ENCODE measurements at regions of chr15 and their contacts with region 1.

Region 1: DNA sequence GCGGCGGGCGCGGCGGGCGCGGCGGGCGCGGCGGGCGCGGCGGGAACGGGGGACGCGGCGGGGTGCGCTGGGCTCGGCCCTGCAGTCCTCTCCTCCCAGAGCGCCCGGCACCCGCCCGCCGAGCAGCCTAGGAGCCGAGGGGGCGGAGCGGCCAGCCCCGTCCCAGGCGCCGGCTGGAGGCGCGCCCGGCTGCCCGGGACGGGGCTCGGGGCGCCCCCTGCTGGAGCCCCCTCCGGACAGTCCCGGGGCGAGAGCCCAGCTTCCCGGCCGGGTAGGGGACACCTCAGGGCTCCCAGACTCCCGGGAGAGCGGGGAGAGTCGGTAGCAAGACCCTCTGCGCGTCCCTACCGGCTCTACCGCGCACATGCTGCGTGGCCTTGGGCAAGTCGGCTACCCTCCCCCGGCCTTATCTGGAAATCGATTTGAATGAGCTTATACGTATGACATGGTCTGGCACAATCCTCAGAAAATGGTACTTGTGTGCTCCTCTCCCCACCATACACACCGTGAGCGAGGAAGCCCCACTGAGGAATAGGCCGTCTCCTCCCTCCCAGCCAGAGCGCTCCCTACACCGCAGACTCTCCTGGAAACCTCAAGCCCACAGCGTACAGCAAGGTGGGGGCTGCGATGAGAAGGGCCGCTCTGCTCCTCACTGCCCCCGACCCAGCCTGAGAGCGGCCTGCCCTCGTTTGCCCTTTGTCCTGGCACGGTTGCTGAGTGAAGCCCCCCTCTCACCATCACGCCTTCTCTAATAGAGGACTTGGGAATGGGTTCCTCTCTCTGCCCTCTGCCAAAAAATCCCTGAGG is at the start of gene DAPK2:
- DNase-seq: peak; percentile 60 to 76 (median 64)
- H3K4me3 ChIP-seq: peak within 1 kb of the TSS; percentile 43 to 51
- H3K4me3 Mint-ChIP-seq: peak within 1 kb of the TSS; percentile 75 to 91 (median 78)
- H3K27ac ChIP-seq: no peak within 1 kb of the TSS
- H3K27ac Mint-ChIP-seq: peak within 1 kb of the TSS in 6 of 7 donors; percentile 13 to 87 (median 72)
- H3K4me1 ChIP-seq: peaks cover 12% of the 10 kb centered on the region
- H3K4me1 Mint-ChIP-seq: peaks cover 4 to 10% (median 5%) of the 10 kb centered on the region in 4 donors
- H3K27me3 ChIP-seq: no peaks in the 10 kb centered on the region
- H3K27me3 Mint-ChIP-seq: peaks cover 6 to 8% of the 10 kb centered on the region in 2 donors
- total RNA-seq, gene DAPK2: 2.3 to 2.9 TPM

Region 2: GRCh38 chr15:63610200-63610841 is 436.2 kb before region 1 on chr15:
- CTCF ChIA-PET with region 1: interaction called, 13 read pairs
- POLR2A ChIA-PET with region 1: interaction called, 6 read pairs
- intact Hi-C with region 1: loop called (anchors 1 kb)
- DNase-seq: peak; percentile 68 to 85 (median 75)
- H3K4me3 ChIP-seq: no peak overlapping the region
- H3K4me3 Mint-ChIP-seq: peak overlapping the region; percentile 3 to 60 (median 34)
- H3K27ac ChIP-seq: peak overlapping the region; percentile 33
- H3K27ac Mint-ChIP-seq: peak overlapping the region; percentile 27 to 97 (median 93)
- H3K4me1 ChIP-seq: peaks cover 33% of the 10 kb centered on the region
- H3K4me1 Mint-ChIP-seq: peaks cover 27 to 47% (median 39%) of the 10 kb centered on the region in 4 donors
- H3K27me3 ChIP-seq: no peaks in the 10 kb centered on the region
- H3K27me3 Mint-ChIP-seq: no peaks in the 10 kb centered on the region

Region 3: GRCh38 chr15:63826528-63826927 is 220.0 kb before region 1 on chr15:
- CTCF ChIA-PET with region 1: interaction called, 10 read pairs
- POLR2A ChIA-PET with region 1: interaction called, 4 read pairs
- intact Hi-C with region 1: no loop called
- DNase-seq: peak; percentile 34 to 49 (median 43)
- H3K4me3 ChIP-seq: no peak overlapping the region
- H3K4me3 Mint-ChIP-seq: peak overlapping the region in 4 of 8 donors; percentile 29 to 43 (median 40)
- H3K27ac ChIP-seq: no peak overlapping the region
- H3K27ac Mint-ChIP-seq: peak overlapping the region in 6 of 7 donors; percentile 36 to 85 (median 74)
- H3K4me1 ChIP-seq: peaks cover 75% of the 10 kb centered on the region
- H3K4me1 Mint-ChIP-seq: peaks cover 62 to 86% (median 74%) of the 10 kb centered on the region in 4 donors
- H3K27me3 ChIP-seq: no peaks in the 10 kb centered on the region
- H3K27me3 Mint-ChIP-seq: no peaks in the 10 kb centered on the region